Common myeloid progenitor, CD34-positive (primary cell): ENCODE measurements at regions of chr16 and their contacts with region 1.

Region 1: GRCh38 chr16:19086322-19087199 is 19.1 kb downstream of the COQ7 start:
- DNase-seq: peak; percentile 68 to 82 (median 81)
- H3K4me3 ChIP-seq: peak overlapping the region; percentile 23 to 76 (median 52)
- H3K27ac ChIP-seq: no peak overlapping the region
- H3K4me1 ChIP-seq: peaks cover 3 to 14% (median 13%) of the 10 kb centered on the region in 4 experiments
- H3K27me3 ChIP-seq: peaks cover 0 to 9% (median 2%) of the 10 kb centered on the region in 5 experiments

Region 2: DNA sequence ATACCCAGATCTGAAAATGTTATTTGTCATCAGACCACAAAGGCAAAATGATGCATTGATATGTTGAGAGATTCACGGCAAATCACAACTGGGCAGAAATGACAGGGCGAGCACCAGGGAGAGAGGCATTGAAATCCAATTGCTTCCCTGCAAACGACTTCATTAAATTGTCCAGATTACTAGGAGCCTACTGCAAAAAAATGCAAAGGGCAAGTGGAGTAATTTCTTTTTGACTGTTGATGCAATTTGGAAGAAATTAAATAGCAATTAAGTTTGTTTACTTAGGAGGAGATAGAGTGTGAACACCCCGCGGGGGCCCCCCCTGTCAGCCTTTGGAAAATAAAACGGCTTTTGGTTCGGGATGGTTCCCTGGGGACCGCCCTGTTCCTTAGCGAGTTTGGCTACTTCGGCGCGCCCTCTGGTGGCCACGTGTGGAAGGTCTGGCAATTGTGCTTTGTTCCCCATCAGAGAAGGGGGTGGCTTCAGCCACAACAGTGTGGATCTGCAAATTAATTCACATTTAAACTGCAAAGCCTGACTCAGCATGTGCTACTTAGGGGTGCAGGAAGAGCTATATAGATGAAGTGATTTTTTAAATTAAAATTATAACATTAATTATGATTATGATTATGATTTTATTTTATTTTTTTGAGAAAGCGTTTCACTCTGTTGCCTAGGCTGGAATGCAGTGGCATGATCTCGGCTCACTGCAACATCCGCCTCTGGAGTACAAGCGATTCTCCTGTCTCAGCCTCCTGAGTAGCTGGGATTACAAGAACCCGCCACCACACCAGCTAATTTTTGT is 117.3 kb before region 1 on chr16:
- CTCF ChIA-PET with region 1: no interaction called
- POLR2A ChIA-PET with region 1: no interaction called
- DNase-seq: peak; percentile 61 to 72 (median 64)
- H3K4me3 ChIP-seq: peak overlapping the region in 5 of 7 experiments; percentile 41 to 70 (median 50)
- H3K27ac ChIP-seq: no peak overlapping the region
- H3K4me1 ChIP-seq: peaks cover 0 to 5% (median 3%) of the 10 kb centered on the region in 4 experiments
- H3K27me3 ChIP-seq: no peaks in the 10 kb centered on the region

Region 3: GRCh38 chr16:19071811-19072777 is 14.5 kb before region 1 on chr16:
- CTCF ChIA-PET with region 1: interaction called, 10 read pairs
- POLR2A ChIA-PET with region 1: no interaction called
- DNase-seq: peak; percentile 45 to 74 (median 69)
- H3K4me3 ChIP-seq: no peak overlapping the region
- H3K27ac ChIP-seq: no peak overlapping the region
- H3K4me1 ChIP-seq: peaks cover 0 to 12% (median 9%) of the 10 kb centered on the region in 4 experiments
- H3K27me3 ChIP-seq: no peaks in the 10 kb centered on the region

Region 4: DNA sequence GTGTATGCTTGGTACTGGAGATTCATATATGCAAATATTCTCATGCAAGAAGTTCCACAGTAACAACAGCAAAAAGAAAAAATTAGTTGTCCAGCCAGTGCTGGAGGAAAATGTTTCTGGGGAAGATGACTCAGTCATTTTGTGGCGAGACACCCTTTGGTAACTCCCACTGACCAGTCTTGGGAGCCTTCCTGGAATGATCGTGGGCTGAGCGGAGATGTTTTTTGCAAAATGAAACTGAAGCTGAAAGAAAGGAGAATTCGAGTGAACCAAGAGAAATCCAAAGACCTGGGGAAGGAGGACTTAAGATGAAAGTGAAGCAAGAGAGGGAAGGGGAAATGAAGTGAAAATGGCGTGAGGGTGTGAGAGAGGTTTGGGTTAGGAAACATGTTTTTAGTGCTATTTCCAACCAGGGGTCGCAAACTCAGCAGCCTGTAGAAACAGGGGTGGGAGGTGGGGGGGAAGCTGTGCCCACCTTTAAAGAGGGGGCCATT is 32.4 kb after region 1 on chr16:
- CTCF ChIA-PET with region 1: interaction called, 12 read pairs
- POLR2A ChIA-PET with region 1: no interaction called
- DNase-seq: peak; percentile 31 to 57 (median 56)
- H3K4me3 ChIP-seq: peak overlapping the region in 6 of 7 experiments; percentile 38 to 82 (median 58)
- H3K27ac ChIP-seq: peak overlapping the region in 1 of 2 experiments; percentile 80
- H3K4me1 ChIP-seq: peaks cover 16 to 60% (median 39%) of the 10 kb centered on the region in 4 experiments
- H3K27me3 ChIP-seq: no peaks in the 10 kb centered on the region

Region 5: DNA sequence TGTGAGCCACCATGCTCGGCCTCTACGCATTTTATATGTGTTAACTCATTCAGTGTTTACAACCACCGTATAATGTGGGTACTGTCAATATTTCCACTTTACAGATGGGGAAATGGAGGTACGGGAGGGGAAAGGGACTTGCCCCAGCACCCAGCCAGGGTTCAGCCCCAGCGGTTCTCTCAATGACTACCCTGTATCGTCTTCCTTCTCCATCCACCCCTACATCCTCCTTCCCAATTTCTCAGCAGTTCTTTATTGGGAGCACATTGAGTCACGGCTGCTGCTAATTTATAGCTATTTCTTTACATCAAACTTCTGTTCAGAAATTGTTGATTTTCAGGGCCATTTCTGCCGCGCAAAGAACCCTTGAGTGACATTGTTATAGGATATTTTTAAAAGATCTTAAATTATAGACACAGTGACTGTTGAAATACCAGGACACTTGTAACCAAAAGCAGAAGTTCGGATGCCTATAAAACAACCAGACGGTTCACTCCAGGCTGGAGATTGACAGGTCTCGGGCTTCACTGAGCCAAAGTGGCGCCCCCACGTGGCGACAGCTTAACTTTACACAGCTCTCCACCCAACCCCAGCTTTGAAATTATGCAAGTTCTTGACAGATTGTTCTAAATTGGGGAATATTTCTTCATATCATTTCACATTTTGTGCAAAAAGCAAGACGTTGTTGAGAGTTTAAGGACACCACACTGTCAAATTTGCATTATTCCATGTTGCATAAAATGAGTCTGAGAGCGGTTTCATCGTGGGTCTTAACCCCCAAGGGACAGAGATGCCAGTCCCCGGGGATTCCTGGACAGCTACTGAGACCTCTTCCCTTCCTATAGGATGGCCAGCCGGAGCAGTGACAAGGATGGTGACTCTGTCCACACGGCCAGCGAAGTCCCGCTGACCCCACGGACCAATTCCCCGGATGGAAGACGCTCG is 93.3 kb after region 1 on chr16:
- CTCF ChIA-PET with region 1: interaction called, 61 read pairs
- POLR2A ChIA-PET with region 1: no interaction called
- DNase-seq: peak; percentile 64 to 92 (median 92)
- H3K4me3 ChIP-seq: no peak overlapping the region
- H3K27ac ChIP-seq: no peak overlapping the region
- H3K4me1 ChIP-seq: no peaks in the 10 kb centered on the region
- H3K27me3 ChIP-seq: peaks cover 0 to 12% (median 6%) of the 10 kb centered on the region in 5 experiments

Region 6: GRCh38 chr16:19274165-19274797 is 187.7 kb after region 1 on chr16:
- CTCF ChIA-PET with region 1: no interaction called
- POLR2A ChIA-PET with region 1: no interaction called
- DNase-seq: no peak
- H3K4me3 ChIP-seq: no peak overlapping the region
- H3K27ac ChIP-seq: no peak overlapping the region
- H3K4me1 ChIP-seq: no peaks in the 10 kb centered on the region
- H3K27me3 ChIP-seq: no peaks in the 10 kb centered on the region

Region 7: DNA sequence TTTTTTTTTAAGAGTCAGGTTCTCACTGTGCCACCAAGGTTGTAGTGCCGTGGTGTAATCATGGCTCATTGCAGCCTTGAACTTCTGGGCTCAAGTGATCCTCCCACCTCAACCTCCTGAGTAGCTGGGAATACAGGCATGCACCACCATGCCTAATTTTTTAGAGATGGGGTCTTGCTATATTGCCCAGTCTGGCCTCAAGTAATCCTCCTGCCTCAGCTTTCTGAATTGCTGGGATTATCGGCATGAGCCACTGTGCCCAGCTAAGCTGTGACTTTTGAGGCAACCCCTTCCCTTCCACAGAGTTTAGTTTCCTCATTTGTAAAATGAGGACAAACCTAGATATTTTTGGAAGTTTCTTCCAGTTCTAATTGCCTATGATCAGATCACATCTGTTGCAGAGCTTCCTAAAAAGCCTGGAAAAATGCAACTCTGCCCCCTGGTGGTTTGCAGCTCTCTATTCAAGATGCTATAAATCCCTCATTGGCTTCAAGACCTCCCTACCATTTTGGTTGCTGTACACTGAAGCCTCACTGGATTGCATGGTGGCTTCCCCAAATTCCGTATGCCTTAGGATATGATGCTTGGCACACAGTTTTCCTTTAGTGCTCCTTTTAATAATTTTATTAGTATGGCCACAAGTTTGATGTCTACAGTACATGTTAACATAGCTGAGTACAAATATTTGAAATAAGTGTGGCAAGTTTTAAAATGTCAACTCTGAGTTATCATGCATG is 416.0 kb after region 1 on chr16:
- CTCF ChIA-PET with region 1: interaction called, 11 read pairs
- POLR2A ChIA-PET with region 1: no interaction called
- DNase-seq: peak; percentile 79 to 89 (median 83)
- H3K4me3 ChIP-seq: no peak overlapping the region
- H3K27ac ChIP-seq: no peak overlapping the region
- H3K4me1 ChIP-seq: no peaks in the 10 kb centered on the region
- H3K27me3 ChIP-seq: no peaks in the 10 kb centered on the region